ENCODE measurements at regions of chr5 and their contacts with region 1.

Region 1: GRCh38 chr5:37511646-37512045 is 132.5 kb downstream of the WDR70 start:
- DNase-seq: no peak
- H3K4me3 ChIP-seq: no peak overlapping the region
- H3K27ac ChIP-seq: no peak overlapping the region
- H3K4me1 ChIP-seq: no peaks in the 10 kb centered on the region
- H3K27me3 ChIP-seq: no peaks in the 10 kb centered on the region
- CTCF ChIP-seq: no peak
- POLR2A ChIP-seq: no peak

Region 2: GRCh38 chr5:37478121-37478894 is 33.3 kb before region 1 on chr5:
- intact Hi-C with region 1: loop called (anchors 2 kb)
- DNase-seq: no peak
- H3K4me3 ChIP-seq: no peak overlapping the region
- H3K27ac ChIP-seq: no peak overlapping the region
- H3K4me1 ChIP-seq: no peaks in the 10 kb centered on the region
- H3K27me3 ChIP-seq: no peaks in the 10 kb centered on the region
- CTCF ChIP-seq: no peak
- POLR2A ChIP-seq: no peak